ENCODE measurements at regions of chr14 and their contacts with region 1.

Region 1: GRCh38 chr14:50773632-50774541 is 57.1 kb downstream of the NIN start:
- DNase-seq: peak; percentile 51 to 62 (median 61)
- ATAC-seq: peak; percentile 93
- H3K4me3 ChIP-seq: no peak overlapping the region
- H3K27ac ChIP-seq: no peak overlapping the region
- H3K4me1 ChIP-seq: no peaks in the 10 kb centered on the region; a peak in 1 of 5 replicates
- H3K27me3 ChIP-seq: no peaks in the 10 kb centered on the region
- CTCF ChIP-seq: peak; percentile 75 to 87 (median 82)
- EP300 ChIP-seq: no peak
- POLR2A ChIP-seq: no peak
- RAD21 ChIP-seq: peak; percentile 55 to 74

Region 2: DNA sequence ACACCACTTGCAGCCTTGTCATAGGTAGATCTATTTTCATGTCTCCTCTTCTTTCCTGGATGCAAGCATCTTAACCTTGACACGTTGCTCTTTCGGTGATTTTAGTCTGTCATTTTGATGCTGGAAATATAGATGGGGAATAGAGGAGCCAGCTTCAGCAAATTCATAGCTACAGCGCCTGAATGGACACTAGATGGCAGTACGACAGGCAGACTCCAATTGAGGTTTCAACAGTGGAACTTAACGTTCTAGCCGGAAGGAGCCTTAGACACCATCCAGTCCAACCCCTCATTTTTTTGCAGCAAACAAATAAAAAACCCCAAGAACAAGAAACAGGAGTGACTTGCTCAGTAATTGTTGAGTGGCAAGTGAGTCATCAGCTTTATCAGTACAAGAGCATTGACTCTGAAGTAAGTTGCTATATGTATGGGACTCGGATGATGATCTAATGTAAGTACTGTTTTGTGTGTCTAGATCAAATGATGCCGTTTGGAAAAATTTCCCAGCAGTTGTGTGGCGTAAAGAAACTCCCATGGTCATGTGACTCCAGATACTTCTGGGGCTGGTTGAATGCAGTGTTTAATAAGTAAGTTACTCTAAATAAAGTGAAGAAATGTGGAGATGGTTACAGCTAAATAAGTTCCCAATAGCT is 452.8 kb before region 1 on chr14:
- CTCF ChIA-PET with region 1: interaction called, 4 read pairs
- POLR2A ChIA-PET with region 1: no interaction called
- in situ Hi-C with region 1: loop called (anchors 25 kb)
- intact Hi-C with region 1: loop called (anchors 5 kb)
- DNase-seq: peak; percentile 43 to 85 (median 60)
- ATAC-seq: peak; percentile 96
- H3K4me3 ChIP-seq: 0 out of 2 replicates have a peak overlapping the region, but pooled peaks have one; percentile 12
- H3K27ac ChIP-seq: peak overlapping the region; percentile 79
- H3K4me1 ChIP-seq: peaks cover 0 to 9% of the 10 kb centered on the region in 2 experiments; a peak in 3 of 5 replicates
- H3K27me3 ChIP-seq: no peaks in the 10 kb centered on the region
- CTCF ChIP-seq: peak; percentile 72 to 82 (median 78)
- EP300 ChIP-seq: peak; percentile 51; the same call in 1 of the 2 replicates
- POLR2A ChIP-seq: no peak
- RAD21 ChIP-seq: peak; percentile 60 to 64

Region 3: GRCh38 chr14:50542941-50543418 is 230.9 kb before region 1 on chr14:
- CTCF ChIA-PET with region 1: no interaction called
- POLR2A ChIA-PET with region 1: no interaction called
- in situ Hi-C with region 1: loop called (anchors 5 kb)
- intact Hi-C with region 1: loop called (anchors 2 kb)
- DNase-seq: peak; percentile 23 to 48 (median 27)
- ATAC-seq: peak; percentile 77
- H3K4me3 ChIP-seq: no peak overlapping the region
- H3K27ac ChIP-seq: no peak overlapping the region
- H3K4me1 ChIP-seq: no peaks in the 10 kb centered on the region
- H3K27me3 ChIP-seq: no peaks in the 10 kb centered on the region; a peak in 1 of 5 replicates
- CTCF ChIP-seq: peak; percentile 14 to 55 (median 51); a peak in 5 of 6 replicates
- EP300 ChIP-seq: no peak
- POLR2A ChIP-seq: no peak
- RAD21 ChIP-seq: peak; percentile 21 to 53; a peak in 3 of 4 replicates

Region 4: DNA sequence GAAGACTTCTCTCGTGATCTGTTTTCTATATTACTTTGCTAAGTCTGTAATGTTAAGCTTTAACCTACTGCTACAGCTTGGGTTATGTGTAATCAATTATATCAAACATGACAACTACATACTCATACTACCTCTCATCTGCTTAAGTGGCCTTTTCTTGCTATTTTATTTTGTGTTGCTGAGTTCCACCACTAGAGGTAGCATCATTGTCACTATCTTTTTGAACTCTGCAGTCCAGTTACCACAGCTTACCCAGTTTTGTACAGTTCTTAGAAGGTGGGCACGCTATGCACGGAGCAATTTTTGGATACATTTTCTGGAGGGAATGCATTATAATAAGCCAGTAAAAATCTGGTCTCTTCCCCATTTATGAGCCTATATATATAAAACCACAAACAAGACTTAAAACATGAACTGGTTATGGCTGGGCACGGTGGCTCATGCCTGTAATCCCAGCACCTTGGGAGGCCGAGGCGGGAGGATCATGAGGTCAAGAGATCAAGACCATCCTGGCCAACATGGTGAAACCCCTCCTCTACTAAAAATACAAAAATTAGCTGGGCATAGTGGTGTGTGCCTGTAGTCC is 154.2 kb before region 1 on chr14:
- CTCF ChIA-PET with region 1: no interaction called
- POLR2A ChIA-PET with region 1: no interaction called
- in situ Hi-C with region 1: no loop called
- intact Hi-C with region 1: loop called (anchors 1 kb)
- DNase-seq: peak in 2 of 4 experiments; percentile 17 to 31
- ATAC-seq: peak; percentile 90
- H3K4me3 ChIP-seq: no peak overlapping the region
- H3K27ac ChIP-seq: no peak overlapping the region
- H3K4me1 ChIP-seq: no peaks in the 10 kb centered on the region
- H3K27me3 ChIP-seq: no peaks in the 10 kb centered on the region
- CTCF ChIP-seq: peak; percentile 28 to 58 (median 51); a peak in 5 of 6 replicates
- EP300 ChIP-seq: no peak
- POLR2A ChIP-seq: no peak
- RAD21 ChIP-seq: peak; percentile 20 to 66; a peak in 2 of 4 replicates

Region 5: GRCh38 chr14:50813544-50813863 is 39.6 kb after region 1 on chr14:
- CTCF ChIA-PET with region 1: no interaction called
- POLR2A ChIA-PET with region 1: no interaction called
- in situ Hi-C with region 1: no loop called
- intact Hi-C with region 1: no loop called
- DNase-seq: no peak
- ATAC-seq: no peak
- H3K4me3 ChIP-seq: no peak overlapping the region
- H3K27ac ChIP-seq: no peak overlapping the region
- H3K4me1 ChIP-seq: no peaks in the 10 kb centered on the region
- H3K27me3 ChIP-seq: no peaks in the 10 kb centered on the region
- CTCF ChIP-seq: no peak
- EP300 ChIP-seq: no peak
- POLR2A ChIP-seq: no peak
- RAD21 ChIP-seq: no peak

Measured in K562 (cell line).